PC-3 (cell line): ENCODE measurements at regions of chr20 and their contacts with region 1.

Region 1: DNA sequence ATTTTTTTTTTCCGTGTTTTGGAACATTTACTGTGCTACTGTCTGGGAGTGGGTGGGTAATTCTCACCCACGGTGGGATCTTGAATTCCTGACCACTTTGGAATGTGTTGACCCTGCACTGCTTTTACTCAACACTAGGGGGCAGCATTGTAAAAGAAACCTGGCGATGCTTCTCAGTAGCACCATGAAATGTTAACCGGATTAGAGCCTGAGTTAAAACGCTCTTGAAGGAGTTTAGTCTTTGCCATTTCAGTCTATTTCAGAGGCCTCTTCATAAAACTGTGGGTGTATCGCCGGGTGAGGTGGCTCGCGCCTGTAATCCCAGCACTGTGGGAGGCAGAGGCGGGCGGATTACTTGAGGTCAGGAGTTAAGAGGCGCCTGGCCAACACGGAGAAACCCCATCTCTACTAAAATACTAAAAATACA is 114.4 kb upstream of the PRND start:
- DNase-seq: peak; percentile 83
- ATAC-seq: peak; percentile 70
- H3K4me3 ChIP-seq: no peak overlapping the region
- H3K27ac ChIP-seq: no peak overlapping the region
- H3K4me1 ChIP-seq: peaks cover 18% of the 10 kb centered on the region
- H3K27me3 ChIP-seq: no peaks in the 10 kb centered on the region
- CTCF ChIP-seq: peak; percentile 96

Region 2: GRCh38 chr20:4401601-4402000 is 205.7 kb before region 1 on chr20:
- CTCF ChIA-PET with region 1: no interaction called
- POLR2A ChIA-PET with region 1: no interaction called
- intact Hi-C with region 1: no loop called
- DNase-seq: no peak
- ATAC-seq: no peak
- H3K4me3 ChIP-seq: no peak overlapping the region
- H3K27ac ChIP-seq: no peak overlapping the region
- H3K4me1 ChIP-seq: peaks cover 6% of the 10 kb centered on the region; the same call in 1 of the 2 replicates
- H3K27me3 ChIP-seq: no peaks in the 10 kb centered on the region
- CTCF ChIP-seq: no peak

Region 3: GRCh38 chr20:4427940-4428586 is 179.2 kb before region 1 on chr20:
- CTCF ChIA-PET with region 1: no interaction called
- POLR2A ChIA-PET with region 1: no interaction called
- intact Hi-C with region 1: no loop called
- DNase-seq: no peak
- ATAC-seq: no peak
- H3K4me3 ChIP-seq: no peak overlapping the region
- H3K27ac ChIP-seq: no peak overlapping the region
- H3K4me1 ChIP-seq: no peaks in the 10 kb centered on the region
- H3K27me3 ChIP-seq: no peaks in the 10 kb centered on the region
- CTCF ChIP-seq: no peak

Region 4: DNA sequence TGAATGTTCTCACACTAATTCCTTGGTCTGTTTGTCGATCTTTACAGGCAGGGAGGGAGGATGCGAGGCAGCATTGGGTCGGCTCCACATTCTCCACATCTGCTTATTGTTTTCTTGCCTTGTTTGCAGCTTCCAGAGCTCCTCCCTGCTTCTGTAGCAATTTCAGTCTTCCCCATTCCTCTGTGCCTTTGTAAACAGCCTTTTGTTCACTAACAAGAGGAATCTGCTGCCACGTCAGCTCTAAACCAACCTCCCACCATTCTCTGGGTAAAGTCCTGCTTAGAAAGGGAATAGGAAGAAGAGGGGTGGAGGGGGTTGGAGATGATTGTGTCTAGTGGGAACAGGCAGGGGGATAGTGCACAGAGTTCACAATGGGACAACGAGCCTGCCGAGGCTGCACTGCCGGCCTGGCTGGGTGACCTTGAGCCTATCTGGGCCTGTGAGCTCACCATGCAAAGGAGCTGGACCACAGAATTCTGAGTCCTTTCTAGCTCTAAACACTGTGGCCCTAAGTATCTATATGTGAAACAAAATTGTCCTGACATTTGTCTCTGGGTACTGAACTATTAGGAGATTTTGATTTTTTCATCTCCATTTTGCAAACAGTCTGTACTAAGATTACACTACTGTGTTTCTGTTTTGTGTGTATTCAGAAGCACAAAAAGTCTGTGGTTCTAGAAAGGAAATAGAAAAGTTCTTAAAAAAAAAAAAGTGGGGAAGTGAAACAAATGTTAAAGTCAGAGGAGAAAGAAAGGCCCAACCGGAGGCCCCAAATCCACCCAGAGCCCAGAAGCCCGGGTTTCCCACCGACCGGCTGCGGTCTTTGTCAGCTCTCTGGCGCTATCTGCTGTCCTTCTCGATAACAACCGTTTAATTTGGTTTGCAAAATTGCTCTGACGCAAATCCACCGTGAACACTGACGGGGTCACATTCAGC is 113.0 kb after region 1 on chr20:
- CTCF ChIA-PET with region 1: interaction called, 12 read pairs
- POLR2A ChIA-PET with region 1: no interaction called
- intact Hi-C with region 1: loop called (anchors 1 kb)
- DNase-seq: peak; percentile 85
- ATAC-seq: peak; percentile 78
- H3K4me3 ChIP-seq: peak overlapping the region; percentile 46; the same call in 1 of the 2 replicates
- H3K27ac ChIP-seq: no peak overlapping the region
- H3K4me1 ChIP-seq: no peaks in the 10 kb centered on the region
- H3K27me3 ChIP-seq: no peaks in the 10 kb centered on the region
- CTCF ChIP-seq: peak; percentile 95

Region 5: DNA sequence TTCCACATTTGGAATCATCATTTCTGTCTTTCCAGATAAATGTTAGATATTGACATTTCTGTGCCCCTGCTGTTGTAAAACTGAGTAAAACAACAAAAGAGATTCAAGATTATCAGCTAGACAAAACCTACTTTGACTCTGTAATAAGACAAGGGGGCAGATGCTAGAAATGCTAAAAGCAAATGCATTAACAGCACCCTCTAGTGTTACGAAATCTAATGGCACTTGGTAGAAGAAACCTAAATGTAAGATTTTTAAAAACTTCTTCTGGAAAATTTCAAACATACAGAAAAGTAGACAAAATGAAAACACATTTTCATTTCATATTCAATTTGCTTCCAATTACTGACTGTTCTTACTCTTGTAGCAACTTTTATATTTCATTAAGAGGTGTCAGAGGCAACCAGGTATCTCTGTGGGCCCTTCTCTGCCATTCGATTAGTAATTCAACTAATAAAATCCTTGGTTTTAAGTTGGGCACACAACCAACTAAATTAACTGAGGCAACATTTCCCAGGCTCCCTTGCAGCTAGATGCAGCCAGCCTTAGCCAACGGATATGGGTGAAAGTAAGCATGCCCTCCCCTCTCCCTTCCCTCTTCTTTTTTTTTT is 349.0 kb after region 1 on chr20:
- CTCF ChIA-PET with region 1: no interaction called
- POLR2A ChIA-PET with region 1: no interaction called
- intact Hi-C with region 1: loop called (anchors 5 kb)
- DNase-seq: peak; percentile 86
- ATAC-seq: peak; percentile 28; the same call in 1 of the 2 replicates
- H3K4me3 ChIP-seq: no peak overlapping the region
- H3K27ac ChIP-seq: no peak overlapping the region
- H3K4me1 ChIP-seq: no peaks in the 10 kb centered on the region
- H3K27me3 ChIP-seq: no peaks in the 10 kb centered on the region
- CTCF ChIP-seq: peak; percentile 96